Ovary (tissue), 10 donors: ENCODE measurements at regions of chr11 and their contacts with region 1.

Region 1: GRCh38 chr11:355581-356458 is 13.5 kb upstream of the B4GALNT4 start:
- DNase-seq: peak; percentile 98 to 99 (median 99)
- H3K4me3 ChIP-seq: peak overlapping the region; percentile 43
- H3K27ac ChIP-seq: peak overlapping the region; percentile 95
- H3K4me1 ChIP-seq: peaks cover 14% of the 10 kb centered on the region
- H3K27me3 ChIP-seq: no peaks in the 10 kb centered on the region
- CTCF ChIP-seq: peak in 1 of 3 donors; percentile 4
- EP300 ChIP-seq: peak; percentile 96
- POLR2A ChIP-seq: peak; percentile 49

Region 2: DNA sequence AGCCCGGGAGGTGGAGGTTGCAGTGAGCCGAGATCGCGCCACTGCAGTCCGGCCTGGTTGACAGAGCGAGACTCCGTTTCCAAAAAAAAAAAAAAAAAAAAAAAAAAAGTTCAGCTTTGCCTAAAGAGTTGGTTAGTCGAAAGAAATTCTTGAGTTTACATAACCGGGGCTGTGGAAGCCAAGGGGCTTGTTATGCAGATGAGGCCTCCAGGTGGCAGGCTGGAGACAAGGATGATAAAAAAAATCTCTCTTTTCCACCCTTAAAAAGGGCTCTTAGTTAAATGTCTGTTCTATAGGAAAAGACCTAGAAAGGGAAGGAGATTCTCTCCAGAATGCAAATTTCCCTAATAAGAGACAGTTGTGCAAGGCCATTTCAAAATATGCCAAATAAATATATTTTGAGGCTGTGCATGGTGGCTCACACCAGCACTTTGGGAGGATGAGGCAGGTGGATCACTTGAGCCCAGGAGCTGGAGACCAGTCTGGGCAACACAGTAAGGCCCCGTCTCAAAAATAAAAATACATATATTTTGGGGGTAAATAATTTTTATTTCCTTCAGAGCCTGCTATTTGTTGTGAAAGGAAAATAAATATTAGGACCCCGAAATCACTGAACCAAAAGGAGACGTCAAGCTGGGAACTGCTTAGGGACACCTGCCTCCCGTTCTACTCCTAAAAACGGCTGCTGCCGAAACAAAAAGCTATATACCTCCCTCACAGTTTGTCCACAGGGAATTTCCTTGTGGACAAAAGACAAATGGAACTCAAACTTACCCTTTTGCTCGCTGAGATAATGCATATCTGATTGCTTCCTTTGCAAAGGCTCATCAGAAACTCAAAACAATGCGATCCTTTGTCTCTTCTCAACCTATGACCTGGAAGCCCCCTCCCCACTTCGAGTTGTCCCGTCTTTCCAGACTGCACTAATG is 50.6 kb before region 1 on chr11:
- intact Hi-C with region 1: loop called in 3 of 4 experiments (anchors 5 kb)
- DNase-seq: peak; percentile 74 to 90 (median 83)
- H3K4me3 ChIP-seq: no peak overlapping the region
- H3K27ac ChIP-seq: no peak overlapping the region
- H3K4me1 ChIP-seq: peaks cover 8% of the 10 kb centered on the region
- H3K27me3 ChIP-seq: no peaks in the 10 kb centered on the region
- CTCF ChIP-seq: peak; percentile 49 to 85 (median 82)
- EP300 ChIP-seq: no peak
- POLR2A ChIP-seq: peak; percentile 13

Region 3: DNA sequence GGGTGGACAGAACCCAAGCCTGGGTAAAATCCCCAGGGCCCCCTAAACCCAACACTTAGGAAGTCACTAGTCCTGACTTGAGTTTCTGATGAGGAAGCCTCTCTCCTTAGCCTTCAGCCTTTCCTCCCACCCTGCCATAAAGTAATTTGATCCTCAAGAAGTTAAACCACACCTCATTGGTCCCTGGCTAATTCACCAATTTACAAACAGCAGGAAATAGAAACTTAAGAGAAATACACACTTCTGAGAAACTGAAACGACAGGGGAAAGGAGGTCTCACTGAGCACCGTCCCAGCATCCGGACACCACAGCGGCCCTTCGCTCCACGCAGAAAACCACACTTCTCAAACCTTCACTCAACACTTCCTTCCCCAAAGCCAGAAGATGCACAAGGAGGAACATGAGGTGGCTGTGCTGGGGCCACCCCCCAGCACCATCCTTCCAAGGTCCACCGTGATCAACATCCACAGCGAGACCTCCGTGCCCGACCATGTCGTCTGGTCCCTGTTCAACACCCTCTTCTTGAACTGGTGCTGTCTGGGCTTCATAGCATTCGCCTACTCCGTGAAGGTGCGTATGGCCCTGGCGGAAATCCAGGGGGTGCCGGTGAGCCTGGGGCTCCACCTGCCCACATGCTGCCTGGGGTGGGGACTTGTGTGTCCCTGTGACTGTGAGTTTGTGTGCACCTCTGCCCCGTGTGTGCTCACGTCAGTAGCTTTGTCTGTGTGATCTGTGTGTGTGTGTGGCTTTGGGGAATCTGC is 41.9 kb before region 1 on chr11 and contains the start of gene IFITM1:
- intact Hi-C with region 1: loop called (anchors 2 to 5 kb)
- DNase-seq: peak in 3 of 5 donors; percentile 58 to 73 (median 71)
- H3K4me3 ChIP-seq: peak within 1 kb of the TSS; percentile 76
- H3K27ac ChIP-seq: peak within 1 kb of the TSS; percentile 79 to 88
- H3K4me1 ChIP-seq: peaks cover 20% of the 10 kb centered on the region
- H3K27me3 ChIP-seq: no peaks in the 10 kb centered on the region
- CTCF ChIP-seq: no peak
- EP300 ChIP-seq: peak; percentile 4
- POLR2A ChIP-seq: peak; percentile 91
- total RNA-seq, gene IFITM1: 317 to 760 (median 496) TPM

Region 4: DNA sequence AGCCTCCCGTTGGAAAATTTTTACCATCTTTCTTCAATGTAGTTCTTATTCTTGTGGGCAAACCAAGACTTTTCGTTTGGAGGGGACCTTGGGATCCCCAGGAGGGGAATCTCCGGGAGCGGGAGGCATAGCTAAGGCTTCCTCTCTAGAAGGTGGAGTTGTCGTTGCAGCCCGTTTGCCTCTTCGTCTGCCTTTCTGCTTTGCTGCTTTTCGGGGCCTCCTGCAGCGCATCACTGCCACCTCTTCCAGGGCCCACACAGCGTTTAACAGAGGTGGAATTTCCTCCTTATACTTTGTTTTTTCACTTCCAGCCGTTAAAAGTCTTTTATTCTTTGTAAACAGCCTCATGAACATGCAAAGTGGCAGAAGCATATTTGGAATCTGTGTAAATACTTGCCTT is 31.7 kb before region 1 on chr11:
- intact Hi-C with region 1: loop called in 1 of 4 experiments (anchors 5 kb)
- DNase-seq: peak in 3 of 5 donors; percentile 34 to 44 (median 38)
- H3K4me3 ChIP-seq: peak overlapping the region; percentile 17
- H3K27ac ChIP-seq: peak overlapping the region; percentile 83 to 94
- H3K4me1 ChIP-seq: peaks cover 26% of the 10 kb centered on the region
- H3K27me3 ChIP-seq: no peaks in the 10 kb centered on the region
- CTCF ChIP-seq: no peak
- EP300 ChIP-seq: no peak
- POLR2A ChIP-seq: no peak

Region 5: DNA sequence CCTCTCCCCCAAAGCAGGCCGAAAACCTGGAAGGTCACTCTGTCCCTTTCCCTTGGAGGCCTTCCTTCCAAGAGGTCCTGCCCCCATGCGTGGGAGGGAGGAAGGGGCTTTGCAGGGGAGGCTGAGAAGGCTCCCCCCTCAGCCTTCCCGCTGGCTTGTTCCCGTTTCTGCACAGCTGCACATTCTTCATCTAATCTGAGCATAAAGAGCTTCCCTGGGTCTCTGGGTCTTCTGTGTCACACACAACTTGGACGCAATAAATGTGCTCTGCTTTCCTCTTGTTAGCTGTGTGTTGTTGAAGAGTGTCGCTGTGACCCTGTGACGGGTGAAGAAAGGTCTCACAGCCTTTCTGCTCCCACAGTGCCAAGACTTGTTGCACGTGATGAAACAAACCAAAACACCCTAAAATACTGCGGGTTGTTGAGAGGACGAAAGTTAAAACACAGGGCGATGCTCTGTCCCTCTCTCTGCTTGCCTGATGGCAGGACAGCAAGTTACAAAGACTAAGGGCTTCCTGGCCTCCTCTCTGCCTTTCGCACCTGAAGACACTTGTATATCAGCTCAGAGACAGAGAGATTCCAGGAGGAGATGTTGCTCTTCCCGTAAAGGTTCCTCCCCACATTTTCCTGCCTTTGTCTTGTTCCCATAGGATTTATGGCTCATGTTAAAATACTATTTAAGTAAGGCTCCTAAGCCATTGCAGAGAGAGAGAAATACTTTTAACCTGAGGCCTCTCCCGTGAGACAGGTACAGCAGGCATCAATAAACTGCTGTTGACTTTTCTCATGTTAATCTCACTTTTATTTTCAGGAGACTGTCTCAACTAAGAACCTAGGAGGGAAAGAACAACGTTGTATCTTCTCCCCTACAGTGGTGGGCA is 19.8 kb before region 1 on chr11:
- intact Hi-C with region 1: loop called in 1 of 4 experiments (anchors 2 kb)
- DNase-seq: peak; percentile 70 to 91 (median 84)
- H3K4me3 ChIP-seq: no peak overlapping the region
- H3K27ac ChIP-seq: peak overlapping the region; percentile 79
- H3K4me1 ChIP-seq: peaks cover 16% of the 10 kb centered on the region
- H3K27me3 ChIP-seq: no peaks in the 10 kb centered on the region
- CTCF ChIP-seq: no peak
- EP300 ChIP-seq: no peak
- POLR2A ChIP-seq: no peak

Region 6: DNA sequence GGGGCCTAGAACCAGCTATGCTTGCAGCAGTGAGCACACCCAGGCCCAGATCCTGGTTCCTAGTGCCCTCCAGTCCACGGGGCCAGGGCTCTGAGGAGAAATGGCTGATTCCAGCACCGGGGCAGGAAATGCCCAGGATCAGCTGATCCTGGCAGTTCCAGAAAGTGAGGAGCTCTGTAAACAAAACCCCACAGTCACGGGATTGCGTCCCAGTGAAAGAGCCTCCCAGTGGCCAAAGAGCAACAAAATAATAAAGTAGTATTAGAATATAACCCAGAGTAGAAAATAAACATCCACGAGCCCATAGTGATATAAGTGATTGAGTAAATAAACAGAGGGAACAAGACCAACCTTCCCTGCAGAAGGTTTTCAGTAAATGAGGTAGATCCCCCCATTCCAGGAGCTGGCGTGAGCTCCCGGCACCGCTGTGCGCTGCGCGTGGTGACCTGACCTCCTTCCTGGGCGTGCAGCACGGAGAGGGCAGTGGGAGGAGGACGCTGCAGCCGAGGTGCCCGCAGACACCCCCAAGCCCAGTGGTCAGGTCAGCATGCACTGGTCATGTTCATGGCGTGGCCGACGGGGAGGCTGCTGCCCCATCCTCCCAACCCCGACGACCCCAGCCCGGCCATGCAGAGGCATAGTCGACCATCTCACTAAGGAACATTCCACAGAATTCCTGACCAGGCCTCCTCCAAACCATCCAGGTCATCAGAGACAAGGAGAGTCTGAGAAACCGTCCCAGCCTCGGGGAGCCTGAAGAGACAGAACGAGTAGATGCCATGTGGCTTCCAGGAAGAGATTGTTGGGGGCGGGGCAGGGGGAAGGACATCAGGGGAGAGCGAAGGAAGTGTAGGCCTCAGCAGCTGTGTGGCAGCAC is 114.1 kb after region 1 on chr11:
- intact Hi-C with region 1: no loop called
- DNase-seq: peak; percentile 70 to 80 (median 77)
- H3K4me3 ChIP-seq: peak overlapping the region; percentile 2
- H3K27ac ChIP-seq: peak overlapping the region; percentile 71
- H3K4me1 ChIP-seq: peaks cover 15% of the 10 kb centered on the region
- H3K27me3 ChIP-seq: no peaks in the 10 kb centered on the region
- CTCF ChIP-seq: peak in 1 of 3 donors; percentile 42
- EP300 ChIP-seq: no peak
- POLR2A ChIP-seq: peak; percentile 34